CD14-positive monocyte (primary cell): ENCODE measurements at regions of chr6 and their contacts with region 1.

Region 1: DNA sequence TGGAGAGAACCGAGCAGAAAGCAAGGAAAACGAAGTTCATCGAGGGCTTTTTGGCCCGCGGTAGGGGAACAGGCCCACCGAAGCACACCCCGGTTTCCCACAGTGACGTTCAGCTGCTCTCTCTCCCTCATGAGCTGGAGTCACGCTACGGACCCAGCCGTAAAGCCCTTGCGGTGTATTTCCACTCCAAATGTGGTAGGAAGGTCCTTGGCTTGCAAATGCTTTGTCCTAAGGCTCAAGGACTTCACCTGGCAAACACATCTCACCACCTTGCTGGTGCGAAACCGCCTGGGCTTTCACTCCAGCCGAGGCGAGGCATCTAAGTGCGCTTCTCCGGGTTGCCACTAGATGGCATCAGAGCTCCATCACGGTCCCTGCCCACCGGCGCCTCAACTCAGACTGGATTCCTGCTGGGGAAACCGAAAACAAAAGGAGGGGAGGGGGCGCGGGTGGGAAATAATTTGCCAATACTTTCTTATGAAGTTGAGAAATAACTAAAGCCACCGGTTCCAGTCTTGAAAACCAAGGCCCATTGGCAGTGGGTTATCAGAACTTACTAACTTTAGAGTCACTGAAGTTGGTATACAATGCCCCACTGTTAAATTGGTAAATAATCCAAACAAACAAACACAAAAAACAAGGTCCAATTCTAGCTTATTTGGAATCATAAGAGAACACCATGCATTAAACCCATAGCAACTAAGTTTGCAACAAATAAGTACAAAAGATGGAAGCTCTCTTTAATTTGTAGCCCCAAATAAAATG is 13.4 kb upstream of the FOXC1 start:
- DNase-seq: peak in 2 of 3 donors; percentile 61 to 65
- H3K4me3 ChIP-seq: no peak overlapping the region
- H3K4me3 Mint-ChIP-seq: peak overlapping the region in 1 of 2 donors; percentile 68
- H3K27ac ChIP-seq: no peak overlapping the region
- H3K27ac Mint-ChIP-seq: peak overlapping the region in 1 of 7 donors; percentile 41
- H3K4me1 ChIP-seq: peaks cover 5 to 7% of the 10 kb centered on the region in 2 donors
- H3K4me1 Mint-ChIP-seq: peaks cover 9% of the 10 kb centered on the region
- H3K27me3 ChIP-seq: peaks cover 15 to 70% of the 10 kb centered on the region in 2 donors
- H3K27me3 Mint-ChIP-seq: peaks cover 50 to 80% (median 56%) of the 10 kb centered on the region in 3 donors
- CTCF ChIP-seq: peak; percentile 96

Region 2: DNA sequence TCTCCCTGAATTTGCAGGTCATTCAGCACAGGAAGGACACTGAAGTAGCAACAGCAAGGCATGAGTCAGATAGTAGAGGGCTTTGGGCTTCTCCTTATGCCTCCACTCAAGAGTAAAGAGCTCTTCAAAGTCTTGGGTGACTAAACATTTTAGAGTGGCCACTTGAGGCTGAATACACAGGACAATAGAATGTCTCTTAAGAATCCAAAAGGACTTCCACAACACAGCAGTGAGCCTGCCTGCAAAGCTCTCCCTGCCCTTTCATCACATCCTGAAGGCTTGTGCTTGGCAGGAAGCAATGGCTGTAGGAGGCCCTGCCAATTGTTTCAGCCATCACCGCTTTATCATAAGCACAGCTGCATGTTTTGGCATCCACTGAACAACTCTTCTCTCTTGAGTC is 247.6 kb before region 1 on chr6:
- intact Hi-C with region 1: no loop called
- DNase-seq: no peak
- H3K4me3 ChIP-seq: no peak overlapping the region
- H3K4me3 Mint-ChIP-seq: no peak overlapping the region
- H3K27ac ChIP-seq: no peak overlapping the region
- H3K27ac Mint-ChIP-seq: peak overlapping the region in 1 of 7 donors; percentile 26
- H3K4me1 ChIP-seq: no peaks in the 10 kb centered on the region
- H3K4me1 Mint-ChIP-seq: no peaks in the 10 kb centered on the region
- H3K27me3 ChIP-seq: peaks cover 4 to 9% of the 10 kb centered on the region in 2 donors
- H3K27me3 Mint-ChIP-seq: peaks cover 6 to 23% (median 7%) of the 10 kb centered on the region in 3 donors
- CTCF ChIP-seq: no peak

Region 3: GRCh38 chr6:2353412-2354137 is 757.3 kb after region 1 on chr6:
- intact Hi-C with region 1: loop called in 1 of 2 experiments (anchors 2 kb)
- DNase-seq: peak; percentile 17 to 37 (median 30)
- H3K4me3 ChIP-seq: no peak overlapping the region
- H3K4me3 Mint-ChIP-seq: no peak overlapping the region
- H3K27ac ChIP-seq: no peak overlapping the region
- H3K27ac Mint-ChIP-seq: no peak overlapping the region
- H3K4me1 ChIP-seq: no peaks in the 10 kb centered on the region
- H3K4me1 Mint-ChIP-seq: peaks cover 7% of the 10 kb centered on the region
- H3K27me3 ChIP-seq: no peaks in the 10 kb centered on the region
- H3K27me3 Mint-ChIP-seq: peaks cover 0 to 2% (median 0%) of the 10 kb centered on the region in 3 donors
- CTCF ChIP-seq: peak; percentile 75

Region 4: DNA sequence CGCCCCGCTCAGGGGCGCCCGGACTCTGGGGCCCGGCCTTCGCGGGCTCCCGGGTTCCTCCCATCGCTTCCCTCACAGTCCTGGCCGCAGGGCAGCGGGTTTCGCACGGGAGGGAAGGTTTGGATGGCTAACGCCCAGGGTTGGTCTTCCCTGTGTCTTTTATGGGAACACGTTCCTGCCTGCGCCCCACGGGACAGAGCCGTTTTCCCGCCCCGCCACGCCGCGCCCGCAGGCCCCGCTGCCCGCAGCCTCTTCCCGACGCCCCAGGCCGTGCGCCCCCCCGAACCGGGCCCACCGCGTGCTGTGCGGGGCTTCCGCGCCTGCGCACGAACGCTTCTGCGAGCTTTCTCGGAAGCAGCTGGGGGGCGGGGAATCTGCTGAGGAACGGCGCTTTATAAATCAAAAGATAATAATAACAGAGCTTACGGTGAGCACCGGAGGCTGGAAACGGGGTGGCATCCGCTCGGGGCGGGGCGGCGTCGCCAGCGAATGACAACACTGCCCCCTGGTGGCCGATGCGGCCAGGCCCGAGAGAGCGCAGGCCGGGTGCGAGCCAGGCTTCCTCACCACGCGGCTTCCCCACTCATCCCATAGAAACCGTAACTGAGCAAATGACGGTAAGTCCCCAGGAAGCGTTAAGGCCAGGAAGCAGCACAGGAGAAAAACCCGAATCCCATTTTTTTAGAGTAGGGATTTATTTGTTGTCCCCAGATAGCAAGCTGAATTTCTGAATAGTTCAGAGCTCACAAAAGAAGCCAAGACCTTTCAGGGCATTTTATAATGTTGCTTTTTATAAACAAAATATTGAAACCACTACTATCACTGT is 1038.1 kb after region 1 on chr6:
- intact Hi-C with region 1: loop called (anchors 2 kb)
- DNase-seq: peak; percentile 59 to 78 (median 64)
- H3K4me3 ChIP-seq: peak overlapping the region; percentile 18 to 77 (median 31)
- H3K4me3 Mint-ChIP-seq: peak overlapping the region; percentile 74 to 83
- H3K27ac ChIP-seq: no peak overlapping the region
- H3K27ac Mint-ChIP-seq: no peak overlapping the region
- H3K4me1 ChIP-seq: peaks cover 7 to 12% of the 10 kb centered on the region in 2 donors
- H3K4me1 Mint-ChIP-seq: peaks cover 6% of the 10 kb centered on the region
- H3K27me3 ChIP-seq: peaks cover 0 to 11% of the 10 kb centered on the region in 2 donors
- H3K27me3 Mint-ChIP-seq: peaks cover 18 to 22% (median 19%) of the 10 kb centered on the region in 3 donors
- CTCF ChIP-seq: peak; percentile 93

Region 5: GRCh38 chr6:2749969-2750600 is 1153.8 kb after region 1 on chr6:
- intact Hi-C with region 1: loop called in 1 of 2 experiments (anchors 5 kb)
- DNase-seq: peak; percentile 55 to 72 (median 66)
- H3K4me3 ChIP-seq: no peak overlapping the region
- H3K4me3 Mint-ChIP-seq: peak overlapping the region in 1 of 2 donors; percentile 13
- H3K27ac ChIP-seq: no peak overlapping the region
- H3K27ac Mint-ChIP-seq: peak overlapping the region in 1 of 7 donors; percentile 43
- H3K4me1 ChIP-seq: peaks cover 0 to 4% of the 10 kb centered on the region in 2 donors
- H3K4me1 Mint-ChIP-seq: peaks cover 5% of the 10 kb centered on the region
- H3K27me3 ChIP-seq: no peaks in the 10 kb centered on the region
- H3K27me3 Mint-ChIP-seq: peaks cover 0 to 9% (median 8%) of the 10 kb centered on the region in 3 donors
- CTCF ChIP-seq: peak; percentile 92

Region 6: DNA sequence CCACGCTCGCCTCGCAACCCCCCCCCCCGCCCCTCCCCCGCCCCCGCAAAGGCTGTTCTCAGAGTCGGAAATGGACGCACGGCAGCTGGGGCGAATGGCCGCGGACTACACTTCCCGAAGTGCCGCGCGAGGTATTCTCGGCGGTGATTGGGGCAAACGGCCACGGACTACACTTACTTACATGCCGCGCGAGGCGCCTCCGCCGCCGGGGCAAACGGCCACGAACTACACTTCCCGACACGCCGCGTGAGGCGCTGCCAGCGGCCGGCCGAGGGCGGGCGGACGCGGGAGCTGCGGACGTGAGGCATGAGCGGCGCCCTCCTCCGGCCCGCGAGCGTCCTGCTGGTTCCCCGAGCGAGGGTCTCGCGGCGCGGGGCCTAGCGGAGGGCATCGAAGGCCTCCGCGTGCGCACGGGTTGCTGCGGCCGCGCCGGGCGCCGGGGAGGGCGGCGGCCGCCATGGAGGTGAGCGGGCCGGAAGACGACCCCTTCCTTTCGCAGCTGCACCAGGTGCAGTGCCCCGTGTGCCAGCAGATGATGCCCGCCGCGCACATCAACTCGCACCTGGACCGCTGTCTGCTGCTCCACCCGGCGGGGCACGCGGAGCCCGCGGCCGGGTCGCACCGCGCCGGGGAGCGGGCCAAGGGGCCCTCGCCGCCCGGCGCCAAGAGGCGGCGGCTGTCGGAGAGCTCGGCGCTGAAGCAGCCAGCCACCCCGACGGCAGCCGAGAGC is 1169.1 kb after region 1 on chr6 and contains the start of gene WRNIP1:
- intact Hi-C with region 1: loop called in 1 of 2 experiments (anchors 10 kb)
- DNase-seq: peak; percentile 98 to 99 (median 99)
- H3K4me3 ChIP-seq: peak within 1 kb of the TSS; percentile 82 to 98 (median 92)
- H3K4me3 Mint-ChIP-seq: peak within 1 kb of the TSS; percentile 91 to 94
- H3K27ac ChIP-seq: peak within 1 kb of the TSS; percentile 88 to 89
- H3K27ac Mint-ChIP-seq: peak within 1 kb of the TSS; percentile 98 to 99 (median 99)
- H3K4me1 ChIP-seq: peaks cover 39 to 58% of the 10 kb centered on the region in 2 donors
- H3K4me1 Mint-ChIP-seq: peaks cover 52% of the 10 kb centered on the region
- H3K27me3 ChIP-seq: no peaks in the 10 kb centered on the region
- H3K27me3 Mint-ChIP-seq: peaks cover 0 to 2% (median 0%) of the 10 kb centered on the region in 3 donors
- CTCF ChIP-seq: peak; percentile 86
- polyA plus RNA-seq, gene WRNIP1: 17.5 to 25.8 (median 17.8) TPM